A673 (cell line): ENCODE measurements at regions of chr20 and their contacts with region 1.

Region 1: DNA sequence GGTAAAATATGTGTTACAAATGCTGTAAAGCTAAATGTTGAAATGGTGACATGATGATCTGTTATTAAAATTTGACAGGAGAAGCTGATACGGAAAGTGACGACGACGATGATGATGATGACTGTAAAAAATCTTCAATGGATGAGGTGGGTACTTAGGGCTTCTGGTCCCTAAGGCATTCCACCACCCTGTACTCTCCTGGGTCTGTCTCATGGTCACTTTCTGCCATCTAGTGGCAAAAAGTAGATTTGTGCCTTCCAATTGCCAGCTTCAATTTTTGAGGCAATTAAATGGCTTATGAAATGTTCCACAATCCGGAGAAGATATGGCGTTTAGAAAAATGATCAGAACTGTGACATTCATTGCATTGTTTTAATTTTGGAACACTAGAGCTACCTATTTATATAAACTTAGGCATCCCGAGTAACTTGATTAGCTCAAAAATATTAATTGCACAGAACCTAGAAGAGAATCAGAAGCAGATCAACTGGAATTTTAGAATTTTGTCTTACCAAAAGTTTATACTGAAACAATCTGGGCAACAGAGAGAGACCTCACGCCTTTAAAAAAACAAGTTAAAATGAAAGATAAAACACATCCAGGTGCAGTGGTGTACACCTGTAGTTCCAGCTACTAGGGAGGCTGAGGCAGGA is 346.5 kb upstream of the PLCB4 start:
- DNase-seq: peak; percentile 81
- H3K4me3 ChIP-seq: no peak overlapping the region
- H3K27ac ChIP-seq: no peak overlapping the region
- H3K4me1 ChIP-seq: peaks cover 11% of the 10 kb centered on the region
- H3K27me3 ChIP-seq: no peaks in the 10 kb centered on the region
- CTCF ChIP-seq: peak; percentile 84

Region 2: GRCh38 chr20:6828794-6829423 is 1893.5 kb before region 1 on chr20:
- CTCF ChIA-PET with region 1: no interaction called
- POLR2A ChIA-PET with region 1: no interaction called
- intact Hi-C with region 1: loop called (anchors 5 kb)
- DNase-seq: peak; percentile 67
- H3K4me3 ChIP-seq: no peak overlapping the region
- H3K27ac ChIP-seq: no peak overlapping the region
- H3K4me1 ChIP-seq: no peaks in the 10 kb centered on the region
- H3K27me3 ChIP-seq: no peaks in the 10 kb centered on the region
- CTCF ChIP-seq: peak; percentile 75

Region 3: GRCh38 chr20:7935027-7935551 is 787.3 kb before region 1 on chr20:
- CTCF ChIA-PET with region 1: interaction called, 65 read pairs
- POLR2A ChIA-PET with region 1: no interaction called
- intact Hi-C with region 1: loop called (anchors 1 kb)
- DNase-seq: no peak
- H3K4me3 ChIP-seq: no peak overlapping the region
- H3K27ac ChIP-seq: no peak overlapping the region
- H3K4me1 ChIP-seq: no peaks in the 10 kb centered on the region
- H3K27me3 ChIP-seq: peaks cover 24% of the 10 kb centered on the region
- CTCF ChIP-seq: no peak

Region 4: GRCh38 chr20:8043687-8044282 is 678.6 kb before region 1 on chr20:
- CTCF ChIA-PET with region 1: interaction called, 24 read pairs
- POLR2A ChIA-PET with region 1: no interaction called
- intact Hi-C with region 1: loop called (anchors 2 kb)
- DNase-seq: peak; percentile 56
- H3K4me3 ChIP-seq: no peak overlapping the region
- H3K27ac ChIP-seq: no peak overlapping the region
- H3K4me1 ChIP-seq: no peaks in the 10 kb centered on the region
- H3K27me3 ChIP-seq: peaks cover 9% of the 10 kb centered on the region
- CTCF ChIP-seq: peak; percentile 75

Region 5: DNA sequence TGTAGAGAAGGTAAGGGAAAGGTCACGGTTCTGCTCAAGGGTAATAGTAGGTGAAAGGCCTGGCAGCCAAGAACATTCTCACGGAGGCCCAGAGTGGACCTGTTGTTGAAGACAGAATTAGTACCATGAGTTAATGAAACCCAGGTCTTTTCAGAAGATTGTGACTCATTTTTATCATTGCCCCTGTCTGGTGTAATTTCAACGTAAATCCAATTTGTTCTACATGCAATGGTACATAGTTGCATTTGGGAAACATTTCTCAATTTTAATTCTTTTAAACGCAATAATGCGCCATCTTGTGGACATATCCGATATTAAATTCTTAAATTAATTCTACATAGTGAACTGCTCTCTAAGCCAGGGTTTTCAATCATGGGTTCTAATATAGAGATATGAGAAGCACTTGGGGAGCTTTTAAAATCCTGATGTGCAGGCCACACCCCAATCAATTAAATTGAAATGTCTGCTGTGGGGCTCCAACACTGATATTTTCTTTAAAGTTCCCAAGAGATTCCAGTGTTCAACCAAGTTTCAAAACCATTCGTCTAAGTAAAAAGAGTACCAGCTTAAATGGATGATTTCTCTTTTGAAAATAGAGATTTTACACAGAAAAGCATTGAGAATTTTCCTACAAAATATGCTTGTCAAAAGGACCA is 332.9 kb before region 1 on chr20:
- CTCF ChIA-PET with region 1: no interaction called
- POLR2A ChIA-PET with region 1: no interaction called
- intact Hi-C with region 1: loop called (anchors 5 kb)
- DNase-seq: peak; percentile 75
- H3K4me3 ChIP-seq: no peak overlapping the region
- H3K27ac ChIP-seq: no peak overlapping the region
- H3K4me1 ChIP-seq: peaks cover 31% of the 10 kb centered on the region
- H3K27me3 ChIP-seq: no peaks in the 10 kb centered on the region
- CTCF ChIP-seq: peak; percentile 61

Region 6: GRCh38 chr20:9035129-9035528 is 312.7 kb after region 1 on chr20:
- CTCF ChIA-PET with region 1: no interaction called
- POLR2A ChIA-PET with region 1: no interaction called
- intact Hi-C with region 1: no loop called
- DNase-seq: peak; percentile 85
- H3K4me3 ChIP-seq: no peak overlapping the region
- H3K27ac ChIP-seq: no peak overlapping the region
- H3K4me1 ChIP-seq: no peaks in the 10 kb centered on the region
- H3K27me3 ChIP-seq: no peaks in the 10 kb centered on the region
- CTCF ChIP-seq: no peak